ENCODE measurements at regions of chr19 and their contacts with region 1.

Region 1: GRCh38 chr19:44912854-44913253 is 1.6 kb upstream of the APOC1 start:
- DNase-seq: peak in 1 of 2 experiments; percentile 13
- H3K4me3 ChIP-seq: no peak overlapping the region
- H3K27ac ChIP-seq: no peak overlapping the region
- H3K4me1 ChIP-seq: peaks cover 19% of the 10 kb centered on the region
- H3K27me3 ChIP-seq: no peaks in the 10 kb centered on the region
- CTCF ChIP-seq: no peak

Region 2: DNA sequence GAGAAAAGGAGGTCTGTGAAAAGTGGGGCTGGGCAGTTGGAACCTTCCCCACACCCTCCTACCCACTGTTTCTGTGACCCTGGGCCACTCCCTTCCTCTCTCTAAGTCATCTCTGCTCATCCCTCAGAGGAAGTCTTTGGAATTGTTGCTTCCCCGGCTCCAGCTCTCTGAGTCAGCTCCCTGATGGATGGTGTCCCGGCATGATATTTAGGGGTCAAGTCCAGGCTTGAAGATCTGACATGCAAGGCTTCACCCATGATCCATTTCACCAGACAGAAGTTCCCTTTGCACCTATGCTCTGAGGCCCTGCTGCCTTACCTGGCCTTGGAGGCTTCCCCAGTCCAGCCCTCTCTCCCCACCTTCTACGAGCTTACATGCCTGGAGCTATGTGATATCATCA is 319.0 kb after region 1 on chr19:
- CTCF ChIA-PET with region 1: interaction called, 14 read pairs
- POLR2A ChIA-PET with region 1: no interaction called
- intact Hi-C with region 1: no loop called
- DNase-seq: no peak
- H3K4me3 ChIP-seq: no peak overlapping the region
- H3K27ac ChIP-seq: no peak overlapping the region
- H3K4me1 ChIP-seq: no peaks in the 10 kb centered on the region
- H3K27me3 ChIP-seq: peaks cover 32% of the 10 kb centered on the region
- CTCF ChIP-seq: no peak